Mammary epithelial cell (primary cell): ENCODE measurements at regions of chr2 and their contacts with region 1.

Region 1: DNA sequence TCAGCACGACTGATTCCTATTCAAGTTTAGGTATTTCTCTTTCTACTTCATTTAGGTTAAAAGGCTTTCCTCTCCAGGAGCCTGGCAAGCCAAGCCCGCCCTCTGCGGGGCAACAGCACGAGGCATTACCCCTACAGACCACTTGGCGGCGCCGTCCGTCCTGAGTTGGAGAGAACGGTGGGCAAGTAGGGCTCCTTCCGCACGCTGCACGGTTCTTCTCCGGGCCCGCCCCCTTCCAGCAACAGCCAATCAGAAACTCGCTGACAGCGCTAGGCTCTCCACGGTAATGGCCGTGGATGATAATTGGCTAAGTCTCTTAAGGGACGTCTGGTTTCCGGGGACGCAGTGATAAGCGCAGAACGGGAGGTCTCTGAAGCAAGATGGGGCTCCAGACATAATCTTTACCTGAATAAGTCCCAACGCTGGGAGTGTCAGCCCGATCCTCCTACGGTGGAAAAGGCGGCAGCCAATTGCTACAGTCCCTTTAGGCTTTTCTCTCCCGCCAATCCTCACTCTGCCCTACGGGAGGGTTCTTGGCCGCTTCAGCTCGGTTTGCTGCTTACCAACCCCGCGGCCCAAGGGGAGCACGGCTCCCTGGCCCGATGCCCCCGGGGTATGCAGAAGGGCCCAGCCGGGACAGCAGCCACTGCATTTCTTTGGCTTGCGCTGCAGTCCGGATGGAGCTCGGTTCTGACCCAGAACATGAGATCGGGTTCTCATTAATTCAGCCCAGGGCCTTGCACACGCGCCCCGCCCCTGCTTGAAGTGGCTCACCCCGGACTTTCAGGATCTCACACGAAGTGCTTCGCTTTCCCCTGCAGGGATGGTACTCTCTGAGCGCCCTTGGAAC is 206.9 kb upstream of the PKDCC start:
- DNase-seq: peak; percentile 94
- H3K4me3 ChIP-seq: peak overlapping the region; percentile 80 to 83 (median 80)
- H3K27ac ChIP-seq: peak overlapping the region; percentile 32
- H3K4me1 ChIP-seq: peaks cover 5% of the 10 kb centered on the region
- H3K27me3 ChIP-seq: no peaks in the 10 kb centered on the region
- CTCF ChIP-seq: peak; percentile 95 to 98

Region 2: DNA sequence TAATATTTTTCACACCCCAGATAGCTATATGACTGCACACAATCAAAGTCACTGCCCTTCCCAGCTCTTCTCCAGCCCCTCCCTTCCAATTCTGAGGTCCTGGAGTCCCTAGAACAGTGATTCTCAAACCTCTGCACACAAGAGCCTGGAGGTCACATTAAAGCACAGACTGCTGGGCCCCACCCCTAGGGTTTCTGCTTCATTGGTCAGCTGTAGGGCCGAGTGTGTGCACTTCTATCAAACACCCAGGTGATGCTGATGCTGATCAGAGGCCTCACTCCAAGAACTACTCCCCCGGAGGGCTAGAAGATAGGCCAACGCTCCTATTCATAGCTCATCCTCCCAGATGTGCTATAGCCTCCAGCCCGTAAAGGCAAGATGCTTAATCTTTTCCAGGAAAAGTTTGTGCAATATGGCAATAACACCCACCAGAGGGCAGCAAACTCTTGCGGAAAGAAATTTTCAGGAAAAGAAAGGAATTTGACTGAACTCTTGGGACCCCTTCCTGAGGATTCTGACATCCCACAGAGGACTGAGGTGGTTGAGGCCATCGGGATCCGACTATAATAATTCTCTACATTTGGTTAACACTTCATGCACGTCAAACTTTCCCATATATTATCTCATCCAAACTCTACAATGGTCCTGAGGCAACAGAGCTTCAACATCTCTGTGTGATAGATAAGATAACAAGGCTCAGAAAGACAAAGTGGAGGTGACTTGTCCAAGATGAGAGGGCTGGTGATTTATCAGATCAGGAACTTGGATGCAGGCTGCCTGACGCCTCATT is 12.7 kb after region 1 on chr2:
- CTCF ChIA-PET with region 1: no interaction called
- dilution Hi-C with region 1: no loop called
- in situ Hi-C with region 1: no loop called
- intact Hi-C with region 1: loop called (anchors 1 kb)
- DNase-seq: peak; percentile 25
- H3K4me3 ChIP-seq: no peak overlapping the region
- H3K27ac ChIP-seq: no peak overlapping the region
- H3K4me1 ChIP-seq: no peaks in the 10 kb centered on the region
- H3K27me3 ChIP-seq: no peaks in the 10 kb centered on the region
- CTCF ChIP-seq: peak; percentile 54 to 79

Region 3: DNA sequence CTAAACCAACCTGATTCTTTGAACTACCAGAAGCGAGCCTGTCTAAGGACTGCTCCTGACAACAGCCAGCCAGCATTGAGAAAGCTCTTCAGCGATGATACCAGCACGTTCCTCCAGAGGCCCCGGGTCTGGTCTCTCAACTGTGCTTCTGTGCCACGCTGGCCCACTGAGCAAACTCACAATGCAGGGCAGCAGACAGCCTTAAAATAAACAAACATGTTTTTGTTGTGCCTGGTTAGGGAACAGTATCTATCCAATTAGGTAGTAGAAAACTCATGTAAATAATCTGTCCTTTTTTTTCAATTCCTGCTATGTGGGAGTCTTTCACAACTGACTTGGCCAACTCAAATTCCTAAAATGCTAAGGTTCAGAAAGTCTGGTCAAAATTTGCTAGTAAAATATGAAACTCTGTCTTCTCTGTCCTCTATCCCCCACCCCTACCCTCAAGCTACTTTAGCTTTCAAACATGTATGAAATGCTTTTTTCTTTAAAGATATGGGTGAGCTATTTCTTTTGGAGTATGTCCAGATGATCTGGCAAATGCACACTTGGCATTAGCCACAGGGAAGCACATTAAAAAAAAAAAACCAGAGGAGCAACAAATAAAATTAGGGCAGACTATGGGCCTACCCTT is 306.8 kb after region 1 on chr2:
- CTCF ChIA-PET with region 1: no interaction called
- dilution Hi-C with region 1: no loop called
- in situ Hi-C with region 1: no loop called
- intact Hi-C with region 1: no loop called
- DNase-seq: no peak
- H3K4me3 ChIP-seq: no peak overlapping the region
- H3K27ac ChIP-seq: no peak overlapping the region
- H3K4me1 ChIP-seq: peaks cover under 1% of the 10 kb centered on the region
- H3K27me3 ChIP-seq: peaks cover 3% of the 10 kb centered on the region
- CTCF ChIP-seq: no peak

Region 4: GRCh38 chr2:42639340-42640077 is 798.6 kb after region 1 on chr2:
- CTCF ChIA-PET with region 1: no interaction called
- dilution Hi-C with region 1: no loop called
- in situ Hi-C with region 1: no loop called
- intact Hi-C with region 1: no loop called
- DNase-seq: no peak
- H3K4me3 ChIP-seq: no peak overlapping the region
- H3K27ac ChIP-seq: no peak overlapping the region
- H3K4me1 ChIP-seq: no peaks in the 10 kb centered on the region
- H3K27me3 ChIP-seq: no peaks in the 10 kb centered on the region
- CTCF ChIP-seq: no peak